ENCODE measurements at regions of chr19 and their contacts with region 1.

Region 1: DNA sequence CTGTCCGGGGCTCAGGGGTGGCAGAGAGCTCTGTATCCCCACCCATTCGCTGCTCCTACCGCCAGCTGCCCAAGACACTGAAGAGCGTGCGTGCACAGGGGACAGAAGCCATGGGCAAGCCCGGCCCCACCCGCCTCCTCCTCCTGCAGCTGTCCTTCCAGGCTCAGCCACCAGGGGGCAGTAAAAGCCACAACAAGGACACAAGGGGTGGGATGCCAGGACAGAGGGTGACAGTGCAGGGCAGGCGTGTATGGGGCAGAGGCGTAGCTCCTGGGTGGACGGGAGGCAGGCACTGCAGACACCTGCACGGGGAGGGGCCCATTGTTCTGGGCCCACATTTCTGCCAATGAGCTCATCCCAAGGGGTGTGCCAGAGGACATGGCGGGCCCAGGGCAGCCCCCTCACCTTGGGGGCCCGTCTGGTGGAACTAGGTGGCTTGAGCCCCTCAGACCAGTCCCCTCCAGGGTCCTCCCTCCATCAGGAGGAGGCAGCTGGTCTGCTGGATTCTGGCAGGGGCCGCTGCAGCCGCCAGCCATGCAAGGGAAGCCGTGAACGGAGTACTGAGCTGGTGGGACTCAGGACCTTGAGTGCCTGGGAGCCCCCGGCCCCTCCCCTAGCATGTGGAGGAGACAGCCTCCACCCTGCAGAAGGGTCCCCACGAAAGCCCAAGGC is 61.1 kb downstream of the MLLT1 start:
- DNase-seq: peak; percentile 94
- ATAC-seq: peak; percentile 84

Region 2: GRCh38 chr19:6279931-6280591 is 61.4 kb after region 1 on chr19 and contains the start of gene MLLT1:
- intact Hi-C with region 1: loop called (anchors 5 kb)
- DNase-seq: peak; percentile 98
- ATAC-seq: peak; percentile 99
- total RNA-seq, gene MLLT1: 37.2 TPM

Region 3: DNA sequence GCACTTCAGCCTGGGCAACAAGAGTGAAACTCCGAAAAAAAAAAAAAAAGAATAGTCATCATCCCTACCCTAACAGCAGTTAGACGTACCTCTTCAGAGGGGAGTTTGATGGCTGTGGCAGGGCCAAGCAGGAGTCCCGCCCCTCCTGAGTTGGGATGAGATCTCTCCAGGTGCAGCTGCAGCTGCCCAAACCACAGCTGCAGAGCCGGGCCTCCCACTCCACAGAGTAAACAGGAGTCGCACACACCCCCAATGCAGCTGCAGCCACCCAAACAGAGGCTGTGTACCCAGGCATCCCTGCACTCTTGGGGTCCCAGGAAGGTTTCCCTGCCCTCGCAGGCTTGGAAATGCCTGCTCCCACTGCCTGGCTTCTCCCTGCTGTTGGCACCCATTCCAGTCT is 78.6 kb after region 1 on chr19:
- intact Hi-C with region 1: loop called (anchors 5 kb)
- DNase-seq: no peak
- ATAC-seq: no peak